ENCODE measurements at regions of chr5 and their contacts with region 1.

Region 1: DNA sequence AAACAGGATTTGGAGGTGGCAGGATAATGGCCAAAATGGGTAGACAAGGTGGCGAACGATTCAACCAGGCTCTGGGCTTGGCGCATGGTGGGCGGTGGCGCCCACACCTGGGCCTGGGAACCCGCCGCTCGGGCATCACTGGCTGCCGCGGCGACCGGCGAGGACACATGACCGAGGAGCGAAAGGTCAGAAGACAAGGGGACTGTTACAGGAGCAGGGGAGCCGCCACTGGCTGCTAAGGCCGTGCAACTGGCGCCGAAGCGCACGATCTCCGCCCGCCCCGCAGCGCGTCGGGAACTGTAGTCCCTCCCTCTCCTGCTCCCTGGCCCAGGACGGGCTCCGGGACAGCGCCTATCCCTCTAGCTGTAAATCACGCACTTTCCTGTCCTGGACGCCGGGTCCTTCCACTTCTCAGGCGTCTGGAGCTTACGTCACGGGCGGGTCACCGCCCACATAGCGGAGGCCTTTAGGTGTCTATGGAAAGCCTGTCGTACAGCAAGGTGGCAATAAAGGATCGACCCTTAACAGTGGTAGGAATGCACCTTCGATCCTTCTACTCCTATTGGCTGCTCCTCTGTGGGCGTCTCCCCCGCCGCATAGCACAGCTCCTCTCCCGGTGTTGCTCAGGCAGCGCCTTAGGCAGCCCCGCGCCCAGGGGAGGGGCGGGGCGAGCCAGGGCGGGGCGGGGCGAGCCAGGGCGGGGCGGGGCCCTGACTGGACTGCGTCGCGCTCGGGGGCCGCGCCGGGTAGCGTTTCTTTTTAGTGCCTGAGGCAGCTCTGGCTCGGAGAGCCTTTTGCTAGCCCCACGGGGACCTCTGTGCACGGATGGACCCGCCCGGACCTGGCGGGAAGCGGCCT is at the start of gene ICE1:
- DNase-seq: peak; percentile 91

Region 2: GRCh38 chr5:5139777-5140478 is 282.3 kb before region 1 on chr5 and contains the start of gene ADAMTS16:
- CTCF ChIA-PET with region 1: interaction called, 11 read pairs
- POLR2A ChIA-PET with region 1: interaction called, 6 read pairs
- DNase-seq: no peak